BJ (cell line): ENCODE measurements at regions of chr10 and their contacts with region 1.

Region 1: DNA sequence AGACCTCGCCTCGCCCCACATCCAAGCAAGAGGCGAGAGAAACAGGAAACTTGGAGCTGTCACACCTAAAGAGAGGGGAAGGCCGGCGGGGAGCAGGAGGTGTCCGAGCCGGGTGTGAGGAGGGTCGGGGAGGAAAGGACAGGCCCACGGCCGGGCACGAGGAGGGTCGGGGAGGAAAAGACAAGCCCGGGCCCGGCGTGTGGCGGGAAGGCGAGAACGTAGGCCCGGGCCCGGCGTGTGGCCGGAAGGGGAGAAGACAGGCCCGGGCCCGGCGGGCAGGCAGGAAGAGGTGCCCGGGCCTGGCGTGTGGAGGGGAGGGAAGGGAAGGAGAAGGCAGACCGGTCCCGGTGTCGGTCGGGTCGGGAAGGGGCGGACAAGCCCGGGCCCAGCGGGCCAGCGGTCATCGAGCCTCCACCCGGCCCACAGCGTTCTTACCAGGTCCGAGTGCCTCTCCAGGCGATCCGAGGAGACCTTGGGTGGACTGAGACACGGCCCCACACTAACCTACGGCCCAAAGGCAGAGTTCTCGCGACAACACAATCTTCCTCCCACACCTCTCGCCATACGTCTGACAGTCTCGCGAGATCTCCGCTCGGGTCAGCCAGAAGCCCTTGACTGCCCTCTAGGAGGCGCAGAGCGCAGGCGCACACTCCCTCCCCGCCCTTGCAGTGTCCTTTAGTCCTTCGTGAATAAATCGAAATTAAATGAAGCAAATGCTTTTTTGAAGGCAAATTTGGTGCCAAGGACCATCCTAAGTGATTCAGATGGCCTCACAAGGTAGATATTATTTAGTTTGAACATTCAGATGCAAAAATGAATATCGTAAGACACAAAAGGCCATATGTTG is at the start of gene NCOA4:
- DNase-seq: peak; percentile 86
- H3K4me3 ChIP-seq: peak within 1 kb of the TSS; percentile 81
- H3K27me3 ChIP-seq: no peaks in the 10 kb centered on the region
- CTCF ChIP-seq: peak; percentile 90
- polyA plus RNA-seq, gene NCOA4: 108 and 156 TPM in 2 replicates

Region 2: DNA sequence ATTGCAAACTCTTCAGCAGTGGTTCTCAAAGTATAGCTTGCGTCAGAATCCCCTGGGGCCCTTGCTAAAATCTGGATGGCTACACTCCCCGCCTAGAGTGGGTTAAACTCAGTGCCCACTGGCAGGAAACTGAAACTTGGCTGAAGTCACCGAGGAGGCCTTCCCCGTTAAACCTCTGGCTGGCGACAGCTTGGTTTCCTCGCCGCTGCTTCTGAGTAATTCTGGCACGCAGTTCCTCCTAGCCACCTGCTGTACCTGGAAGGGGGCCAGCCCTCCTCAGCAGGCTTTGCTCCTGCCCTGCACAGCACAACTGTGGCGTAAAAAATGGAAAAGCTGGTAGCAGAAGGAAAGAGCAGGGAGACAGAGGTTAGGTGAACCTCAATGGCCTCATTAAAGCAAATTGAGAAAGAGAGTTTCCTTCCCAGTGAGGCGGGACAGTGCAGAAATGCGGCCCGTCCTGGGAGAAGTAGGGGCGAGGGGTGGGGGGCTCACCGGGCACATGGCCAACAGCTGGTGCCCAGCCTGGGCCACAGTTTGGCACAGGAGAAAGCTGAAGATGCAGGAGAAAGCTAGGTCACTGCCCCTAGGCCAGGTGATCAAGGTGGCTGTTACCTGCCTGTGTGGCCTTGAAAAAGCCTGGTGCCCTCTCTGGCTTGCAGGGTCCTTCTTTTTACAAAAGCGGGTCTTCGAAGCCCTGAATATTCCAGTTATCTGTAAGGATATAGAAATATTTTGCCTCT is 609.7 kb before region 1 on chr10:
- CTCF ChIA-PET with region 1: no interaction called
- POLR2A ChIA-PET with region 1: no interaction called
- DNase-seq: no peak
- H3K4me3 ChIP-seq: no peak overlapping the region
- H3K27me3 ChIP-seq: peaks cover 2% of the 10 kb centered on the region; the same call in 1 of the 2 replicates
- CTCF ChIP-seq: no peak

Region 3: GRCh38 chr10:46002916-46003693 is 27.2 kb before region 1 on chr10:
- CTCF ChIA-PET with region 1: interaction called, 10 read pairs
- POLR2A ChIA-PET with region 1: no interaction called
- DNase-seq: no peak
- H3K4me3 ChIP-seq: no peak overlapping the region
- H3K27me3 ChIP-seq: no peaks in the 10 kb centered on the region
- CTCF ChIP-seq: no peak

Region 4: GRCh38 chr10:46019569-46020343 is 10.6 kb before region 1 on chr10:
- CTCF ChIA-PET with region 1: interaction called, 18 read pairs
- POLR2A ChIA-PET with region 1: no interaction called
- DNase-seq: no peak
- H3K4me3 ChIP-seq: no peak overlapping the region
- H3K27me3 ChIP-seq: no peaks in the 10 kb centered on the region
- CTCF ChIP-seq: no peak